ENCODE measurements at regions of chrX and their contacts with region 1.

Region 1: GRCh38 chrX:19887911-19888879 is 795 bp upstream of the SH3KBP1 start:
- DNase-seq: peak; percentile 80 to 82
- H3K4me3 ChIP-seq: peak overlapping the region; percentile 48
- H3K4me1 ChIP-seq: peaks cover 12% of the 10 kb centered on the region
- H3K27me3 ChIP-seq: no peaks in the 10 kb centered on the region

Region 2: GRCh38 chrX:19372170-19372546 is 516.0 kb before region 1 on chrX:
- in situ Hi-C with region 1: loop called (anchors 10 kb)
- DNase-seq: peak; percentile 88 to 91
- H3K4me3 ChIP-seq: peak overlapping the region; percentile 7; the same call in 1 of the 2 replicates
- H3K4me1 ChIP-seq: peaks cover 5% of the 10 kb centered on the region
- H3K27me3 ChIP-seq: no peaks in the 10 kb centered on the region

Region 3: GRCh38 chrX:19544693-19545305 is 343.4 kb before region 1 on chrX:
- in situ Hi-C with region 1: loop called (anchors 10 kb)
- DNase-seq: peak; percentile 75 to 79
- H3K4me3 ChIP-seq: no peak overlapping the region
- H3K4me1 ChIP-seq: no peaks in the 10 kb centered on the region; the same call in 1 of the 2 replicates
- H3K27me3 ChIP-seq: no peaks in the 10 kb centered on the region

Region 4: GRCh38 chrX:19739683-19740082 is 148.5 kb before region 1 on chrX:
- in situ Hi-C with region 1: loop called (anchors 5 kb)
- DNase-seq: peak; percentile 78 to 87
- H3K4me3 ChIP-seq: no peak overlapping the region
- H3K4me1 ChIP-seq: no peaks in the 10 kb centered on the region; the same call in 1 of the 2 replicates
- H3K27me3 ChIP-seq: no peaks in the 10 kb centered on the region